Naive thymus-derived CD4-positive, alpha-beta T cell (primary cell): ENCODE measurements at regions of chr6 and their contacts with region 1.

Region 1: GRCh38 chr6:149393002-149393679 is 6.9 kb upstream of the SUMO4 start:
- DNase-seq: no peak
- ATAC-seq: no peak
- H3K4me3 ChIP-seq: no peak overlapping the region
- H3K4me3 Mint-ChIP-seq: peak overlapping the region in 5 of 10 donors; percentile 3 to 41 (median 16)
- H3K27ac ChIP-seq: no peak overlapping the region
- H3K27ac Mint-ChIP-seq: peak overlapping the region in 7 of 9 donors; percentile 9 to 79 (median 30)
- H3K4me1 ChIP-seq: peaks cover 7 to 11% of the 10 kb centered on the region in 2 donors
- H3K4me1 Mint-ChIP-seq: peaks cover 46 to 76% (median 70%) of the 10 kb centered on the region in 7 donors
- H3K27me3 ChIP-seq: no peaks in the 10 kb centered on the region
- H3K27me3 Mint-ChIP-seq: no peaks in the 10 kb centered on the region

Region 2: DNA sequence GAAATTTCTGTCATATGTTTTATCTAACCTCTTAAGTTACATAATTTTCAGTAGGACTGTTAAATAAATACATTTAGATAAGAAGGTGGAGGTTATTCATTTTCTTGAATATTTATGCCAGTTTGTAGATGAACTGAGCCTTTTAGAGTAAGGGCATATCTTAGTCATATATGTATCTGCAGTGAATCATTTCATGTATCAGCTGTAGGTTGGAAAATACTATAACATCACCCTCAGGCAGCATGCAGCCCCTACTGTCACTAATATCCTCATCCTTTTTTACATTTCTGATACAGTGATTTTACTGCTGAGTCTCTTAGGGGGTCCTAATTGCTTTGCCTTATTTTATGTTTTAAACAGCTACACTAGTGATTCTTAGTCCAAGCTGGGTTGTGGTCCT is 12.6 kb before region 1 on chr6:
- CTCF ChIA-PET with region 1: no interaction called
- POLR2A ChIA-PET with region 1: interaction called, 3 read pairs
- intact Hi-C with region 1: loop called in 1 of 2 experiments (anchors 2 kb)
- DNase-seq: no peak
- ATAC-seq: no peak
- H3K4me3 ChIP-seq: no peak overlapping the region
- H3K4me3 Mint-ChIP-seq: no peak overlapping the region
- H3K27ac ChIP-seq: no peak overlapping the region
- H3K27ac Mint-ChIP-seq: peak overlapping the region in 1 of 9 donors; percentile 19
- H3K4me1 ChIP-seq: peaks cover 0 to 4% of the 10 kb centered on the region in 2 donors
- H3K4me1 Mint-ChIP-seq: peaks cover 24 to 74% (median 48%) of the 10 kb centered on the region in 7 donors
- H3K27me3 ChIP-seq: no peaks in the 10 kb centered on the region
- H3K27me3 Mint-ChIP-seq: no peaks in the 10 kb centered on the region

Region 3: GRCh38 chr6:149405823-149406765 is 13.0 kb after region 1 on chr6:
- CTCF ChIA-PET with region 1: no interaction called
- POLR2A ChIA-PET with region 1: interaction called, 4 read pairs
- intact Hi-C with region 1: loop called (anchors 2 kb)
- DNase-seq: no peak
- ATAC-seq: peak; percentile 49
- H3K4me3 ChIP-seq: no peak overlapping the region
- H3K4me3 Mint-ChIP-seq: no peak overlapping the region
- H3K27ac ChIP-seq: no peak overlapping the region
- H3K27ac Mint-ChIP-seq: peak overlapping the region in 7 of 9 donors; percentile 41 to 79 (median 48)
- H3K4me1 ChIP-seq: no peaks in the 10 kb centered on the region
- H3K4me1 Mint-ChIP-seq: peaks cover 0 to 51% (median 9%) of the 10 kb centered on the region in 7 donors
- H3K27me3 ChIP-seq: no peaks in the 10 kb centered on the region
- H3K27me3 Mint-ChIP-seq: no peaks in the 10 kb centered on the region